ENCODE measurements at regions of chr15 and their contacts with region 1.

Region 1: DNA sequence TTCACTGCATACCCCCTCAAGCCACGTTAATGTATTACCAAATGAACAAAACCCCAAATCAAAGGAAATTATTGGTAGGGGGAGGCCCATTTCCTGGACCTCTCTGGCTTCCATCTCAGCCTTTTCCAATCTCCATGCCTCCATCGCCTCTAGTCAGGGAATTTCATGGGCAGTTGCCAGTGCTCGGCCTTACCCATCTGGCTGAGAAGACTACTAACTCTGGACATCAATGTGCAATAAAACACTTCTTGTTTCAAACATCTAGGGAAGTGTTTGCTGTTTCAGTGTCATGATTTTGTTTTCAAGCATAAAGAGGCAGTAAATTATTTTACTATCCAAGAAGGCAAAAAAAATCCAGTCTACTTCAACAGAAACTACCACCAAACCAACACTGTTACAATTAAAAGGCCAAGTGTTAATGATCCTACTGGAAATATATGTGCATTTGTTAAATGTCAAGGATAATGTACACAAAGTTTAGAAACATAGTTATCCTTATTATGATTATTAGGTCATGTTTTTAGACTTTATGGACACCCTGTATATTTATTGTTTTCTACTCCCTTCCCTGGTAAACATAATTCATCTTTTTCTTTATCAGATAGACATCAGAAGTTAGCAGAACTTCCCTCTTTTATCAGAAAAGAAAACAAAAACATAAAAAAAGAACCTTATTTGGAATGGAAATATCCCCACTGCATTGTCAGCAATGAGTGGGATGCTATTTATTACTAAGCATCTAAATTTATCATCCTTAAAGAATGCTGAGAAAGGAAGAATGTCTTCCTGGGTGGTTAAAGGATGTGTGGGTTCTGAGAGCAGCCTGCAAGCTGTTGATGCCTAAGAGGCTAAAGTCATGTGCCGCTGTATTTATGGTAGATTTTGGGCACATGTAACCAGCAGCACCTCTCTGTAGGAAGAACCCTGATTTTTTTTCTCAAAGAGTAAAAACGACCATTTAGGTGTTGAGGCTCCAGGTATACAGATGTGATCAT is 15.2 kb downstream of the LDHAL6B start:
- DNase-seq: no peak
- H3K4me3 ChIP-seq: no peak overlapping the region
- H3K27ac ChIP-seq: no peak overlapping the region
- H3K4me1 ChIP-seq: peaks cover 31% of the 10 kb centered on the region
- H3K27me3 ChIP-seq: no peaks in the 10 kb centered on the region
- CTCF ChIP-seq: no peak

Region 2: DNA sequence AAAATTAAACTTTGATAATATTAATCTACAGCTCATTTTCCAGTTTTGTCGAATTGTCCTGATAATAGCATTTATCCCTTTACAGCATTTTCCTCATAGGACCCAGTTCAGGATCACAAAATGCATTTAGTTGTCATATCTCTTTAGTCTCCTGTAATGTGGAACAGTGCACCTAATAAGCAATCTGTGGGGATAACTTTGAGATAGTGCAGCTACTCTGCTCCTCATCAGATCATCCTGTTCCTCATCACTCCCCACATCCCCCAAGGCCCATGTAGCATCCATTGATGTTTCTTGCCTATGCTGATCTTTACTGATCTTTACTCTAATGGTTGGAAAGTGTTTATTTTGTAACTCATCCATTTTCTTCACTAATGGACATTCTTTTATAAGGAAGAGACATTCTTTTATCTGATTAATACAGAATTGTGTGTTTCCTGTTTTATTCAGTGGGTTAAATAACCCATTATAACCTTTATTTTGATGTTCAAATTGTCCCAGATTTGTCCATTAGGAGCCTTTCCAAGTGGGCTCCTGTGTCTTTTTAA is 226.8 kb before region 1 on chr15:
- intact Hi-C with region 1: loop called (anchors 5 kb)
- DNase-seq: no peak
- H3K4me3 ChIP-seq: no peak overlapping the region
- H3K27ac ChIP-seq: no peak overlapping the region
- H3K4me1 ChIP-seq: peaks cover 41% of the 10 kb centered on the region
- H3K27me3 ChIP-seq: no peaks in the 10 kb centered on the region
- CTCF ChIP-seq: no peak

Region 3: DNA sequence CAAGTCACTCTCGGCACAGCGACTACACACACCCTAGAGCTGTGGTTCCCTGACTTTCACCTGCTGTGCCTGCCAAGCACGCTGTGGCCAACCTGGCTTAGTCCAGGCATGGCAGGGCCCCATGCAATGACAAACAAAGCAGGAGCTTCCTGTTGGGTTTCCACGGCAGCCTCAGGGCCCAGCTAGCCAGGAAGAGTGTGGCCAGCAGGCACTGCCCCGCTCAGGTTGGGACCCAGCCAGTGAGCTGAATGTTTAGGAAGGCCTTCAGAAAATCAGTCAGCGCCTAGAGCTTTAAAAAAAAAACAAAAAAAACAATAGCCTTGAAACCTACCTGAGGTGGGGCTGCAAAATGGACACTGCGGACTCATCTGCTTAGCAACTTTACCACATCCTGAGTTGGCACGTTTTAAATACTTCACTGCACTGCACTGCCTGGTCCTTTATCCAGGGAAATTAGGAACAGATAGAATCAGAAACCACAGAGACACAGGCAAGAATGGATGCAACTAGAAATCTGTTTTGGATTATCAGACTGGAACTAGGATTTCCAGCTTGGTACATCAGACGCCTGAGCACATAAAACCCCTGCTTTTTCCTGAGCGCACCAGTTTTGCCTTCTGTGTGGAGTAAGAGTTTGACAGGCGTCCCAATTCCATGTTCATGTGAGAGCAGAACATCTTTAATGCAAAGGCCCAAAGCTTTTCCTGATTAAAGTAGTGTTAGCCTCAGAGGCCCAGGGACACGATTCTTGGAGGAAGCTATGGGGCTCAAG is 51.3 kb before region 1 on chr15:
- intact Hi-C with region 1: no loop called
- DNase-seq: no peak
- H3K4me3 ChIP-seq: no peak overlapping the region
- H3K27ac ChIP-seq: peak overlapping the region; percentile 13
- H3K4me1 ChIP-seq: peaks cover 19% of the 10 kb centered on the region
- H3K27me3 ChIP-seq: no peaks in the 10 kb centered on the region
- CTCF ChIP-seq: no peak

Region 4: GRCh38 chr15:59699810-59700431 is 478.1 kb after region 1 on chr15:
- intact Hi-C with region 1: no loop called
- DNase-seq: no peak
- H3K4me3 ChIP-seq: no peak overlapping the region
- H3K27ac ChIP-seq: no peak overlapping the region
- H3K4me1 ChIP-seq: no peaks in the 10 kb centered on the region
- H3K27me3 ChIP-seq: peaks cover 13% of the 10 kb centered on the region
- CTCF ChIP-seq: no peak

Measured in left ventricle myocardium inferior (tissue), 1 donor.